Activated B cell treated with CpG ODN at 0.5 μM for 24 hours (primary cell): ENCODE measurements at regions of chr19 and their contacts with region 1.

Region 1: GRCh38 chr19:44890366-44891015 is 563 bp upstream of the TOMM40 start:
- DNase-seq: peak; percentile 98
- ATAC-seq: peak; percentile 77
- H3K4me3 Mint-ChIP-seq: peak overlapping the region; percentile 83
- H3K27ac Mint-ChIP-seq: peak overlapping the region; percentile 87
- H3K4me1 Mint-ChIP-seq: peaks cover 34% of the 10 kb centered on the region
- H3K27me3 Mint-ChIP-seq: no peaks in the 10 kb centered on the region
- CTCF ChIP-seq: no peak

Region 2: GRCh38 chr19:44212250-44212865 is 678.1 kb before region 1 on chr19 and contains the start of gene ZNF227:
- CTCF ChIA-PET with region 1: no interaction called
- POLR2A ChIA-PET with region 1: interaction called, 3 read pairs
- intact Hi-C with region 1: loop called (anchors 5 kb)
- DNase-seq: peak; percentile 69
- ATAC-seq: peak; percentile 93
- H3K4me3 Mint-ChIP-seq: peak within 1 kb of the TSS; percentile 95
- H3K27ac Mint-ChIP-seq: peak within 1 kb of the TSS; percentile 89
- H3K4me1 Mint-ChIP-seq: peaks cover 20% of the 10 kb centered on the region
- H3K27me3 Mint-ChIP-seq: no peaks in the 10 kb centered on the region
- CTCF ChIP-seq: no peak
- total RNA-seq, gene ZNF227: 33.1 and 36.9 TPM in 2 replicates

Region 3: DNA sequence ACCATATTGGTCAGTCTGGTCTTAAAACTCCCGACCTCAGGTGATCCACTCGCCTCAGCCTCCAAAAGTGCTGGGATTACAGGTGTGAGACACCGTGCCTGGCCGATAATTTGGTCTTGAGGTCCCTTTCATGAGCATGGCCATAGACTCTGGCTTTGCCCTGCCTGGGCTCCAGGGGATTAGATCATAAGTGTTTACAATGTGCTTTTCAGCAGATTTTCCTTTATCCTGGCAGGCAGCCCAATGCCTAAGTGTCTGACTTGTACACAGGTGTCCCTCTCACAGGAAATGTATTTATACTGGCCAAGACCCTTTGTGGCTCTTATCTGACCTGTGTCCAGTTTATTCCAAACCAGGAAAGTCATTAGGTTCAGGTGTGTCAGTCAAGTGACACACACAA is 65.7 kb before region 1 on chr19:
- CTCF ChIA-PET with region 1: no interaction called
- POLR2A ChIA-PET with region 1: interaction called, 14 read pairs
- intact Hi-C with region 1: no loop called
- DNase-seq: no peak
- ATAC-seq: no peak
- H3K4me3 Mint-ChIP-seq: no peak overlapping the region
- H3K27ac Mint-ChIP-seq: no peak overlapping the region
- H3K4me1 Mint-ChIP-seq: no peaks in the 10 kb centered on the region
- H3K27me3 Mint-ChIP-seq: peaks cover 11% of the 10 kb centered on the region
- CTCF ChIP-seq: no peak

Region 4: GRCh38 chr19:44856421-44857083 is 33.9 kb before region 1 on chr19:
- CTCF ChIA-PET with region 1: no interaction called
- POLR2A ChIA-PET with region 1: no interaction called
- intact Hi-C with region 1: no loop called
- DNase-seq: no peak
- ATAC-seq: no peak
- H3K4me3 Mint-ChIP-seq: no peak overlapping the region
- H3K27ac Mint-ChIP-seq: no peak overlapping the region
- H3K4me1 Mint-ChIP-seq: no peaks in the 10 kb centered on the region
- H3K27me3 Mint-ChIP-seq: peaks cover 20% of the 10 kb centered on the region
- CTCF ChIP-seq: no peak

Region 5: DNA sequence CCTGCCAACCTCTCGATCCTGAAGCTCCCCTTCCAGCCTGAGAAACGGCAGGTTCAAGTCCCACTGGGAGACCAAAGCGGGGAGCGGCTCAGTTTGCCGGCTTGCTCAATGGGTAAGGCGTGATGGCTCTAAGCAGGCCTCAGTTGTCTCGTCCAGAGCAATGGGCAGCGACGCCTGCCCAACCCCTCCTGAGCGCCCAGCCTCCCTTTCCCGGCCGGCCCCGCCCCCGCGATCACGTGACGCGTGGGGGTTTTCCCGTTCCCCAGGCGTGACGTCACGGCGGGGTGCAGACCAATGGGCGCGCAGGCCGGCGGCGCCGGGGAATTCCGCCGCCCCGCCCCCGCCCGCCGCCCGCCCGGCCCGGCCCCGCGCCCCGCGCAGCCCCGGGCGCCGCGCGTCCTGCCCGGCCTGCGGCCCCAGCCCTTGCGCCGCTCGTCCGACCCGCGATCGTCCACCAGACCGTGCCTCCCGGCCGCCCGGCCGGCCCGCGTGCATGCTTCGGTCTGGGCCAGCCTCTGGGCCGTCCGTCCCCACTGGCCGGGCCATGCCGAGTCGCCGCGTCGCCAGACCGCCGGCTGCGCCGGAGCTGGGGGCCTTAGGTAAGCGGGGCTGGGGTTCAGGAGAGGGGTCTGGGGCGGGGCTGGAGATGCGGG is 110.7 kb after region 1 on chr19 and contains the start of gene RELB:
- CTCF ChIA-PET with region 1: no interaction called
- POLR2A ChIA-PET with region 1: interaction called, 6 read pairs
- intact Hi-C with region 1: loop called (anchors 1 kb)
- DNase-seq: peak; percentile 99
- ATAC-seq: peak; percentile 43
- H3K4me3 Mint-ChIP-seq: peak within 1 kb of the TSS; percentile 98
- H3K27ac Mint-ChIP-seq: peak within 1 kb of the TSS; percentile 99
- H3K4me1 Mint-ChIP-seq: peaks cover 36% of the 10 kb centered on the region
- H3K27me3 Mint-ChIP-seq: no peaks in the 10 kb centered on the region
- CTCF ChIP-seq: no peak
- total RNA-seq, gene RELB: 117 and 135 TPM in 2 replicates

Region 6: DNA sequence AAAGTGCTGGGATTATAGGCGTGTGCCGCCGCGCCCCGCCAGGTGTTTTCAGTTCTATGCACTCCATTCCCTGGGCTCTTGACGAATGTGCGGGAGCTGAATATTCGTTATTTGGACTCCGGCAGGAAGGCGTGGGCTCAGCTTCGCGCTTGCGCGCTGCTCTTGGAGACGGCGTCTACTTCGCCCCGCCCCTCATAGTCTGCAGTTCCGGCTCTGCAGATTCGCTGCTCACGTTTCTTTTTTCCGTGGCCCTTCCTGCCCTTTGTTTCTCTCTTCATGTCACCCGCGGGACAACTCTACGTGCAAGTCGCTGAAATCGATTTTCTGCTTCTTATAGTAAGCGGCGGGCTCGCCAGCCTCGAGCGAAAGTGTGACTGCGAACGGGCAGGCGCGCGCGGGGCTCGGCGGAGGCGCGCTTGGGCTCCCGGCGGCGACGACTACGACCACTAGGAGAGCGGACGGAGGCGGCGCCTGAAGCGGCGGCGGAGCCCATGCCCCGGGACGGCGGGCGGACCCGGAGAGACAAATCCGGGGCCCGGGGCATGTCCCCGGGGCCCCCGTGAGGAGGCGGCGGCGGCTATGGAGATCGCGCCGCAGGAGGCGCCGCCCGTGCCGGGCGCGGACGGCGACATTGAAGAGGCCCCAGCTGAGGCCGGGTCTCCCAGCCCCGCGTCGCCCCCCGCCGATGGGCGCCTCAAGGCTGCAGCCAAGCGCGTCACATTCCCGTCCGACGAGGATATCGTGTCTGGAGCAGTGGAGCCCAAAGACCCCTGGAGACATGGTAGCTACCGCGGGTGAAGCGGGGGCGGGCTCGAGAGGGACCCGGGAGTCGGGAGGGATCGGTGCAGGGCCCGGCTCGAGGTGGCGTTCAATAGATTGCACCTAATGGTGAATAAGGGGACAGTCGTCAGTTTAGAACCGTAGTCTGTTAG is 202.5 kb after region 1 on chr19 and contains the start of gene PPP1R37:
- CTCF ChIA-PET with region 1: no interaction called
- POLR2A ChIA-PET with region 1: no interaction called
- intact Hi-C with region 1: loop called (anchors 1 kb)
- DNase-seq: peak; percentile 81
- ATAC-seq: peak; percentile 69
- H3K4me3 Mint-ChIP-seq: peak within 1 kb of the TSS; percentile 93
- H3K27ac Mint-ChIP-seq: peak within 1 kb of the TSS; percentile 99
- H3K4me1 Mint-ChIP-seq: peaks cover 54% of the 10 kb centered on the region
- H3K27me3 Mint-ChIP-seq: no peaks in the 10 kb centered on the region
- CTCF ChIP-seq: no peak
- total RNA-seq, gene PPP1R37: 18.8 and 27.2 TPM in 2 replicates

Region 7: GRCh38 chr19:45405435-45406225 is 515.1 kb after region 1 on chr19:
- CTCF ChIA-PET with region 1: no interaction called
- POLR2A ChIA-PET with region 1: no interaction called
- intact Hi-C with region 1: loop called (anchors 1 kb)
- DNase-seq: peak; percentile 76
- ATAC-seq: peak; percentile 65
- H3K4me3 Mint-ChIP-seq: peak overlapping the region; percentile 96
- H3K27ac Mint-ChIP-seq: peak overlapping the region; percentile 95
- H3K4me1 Mint-ChIP-seq: peaks cover 43% of the 10 kb centered on the region
- H3K27me3 Mint-ChIP-seq: peaks cover 12% of the 10 kb centered on the region
- CTCF ChIP-seq: no peak